Caco-2 (cell line): ENCODE measurements at regions of chr6 and their contacts with region 1.

Region 1: DNA sequence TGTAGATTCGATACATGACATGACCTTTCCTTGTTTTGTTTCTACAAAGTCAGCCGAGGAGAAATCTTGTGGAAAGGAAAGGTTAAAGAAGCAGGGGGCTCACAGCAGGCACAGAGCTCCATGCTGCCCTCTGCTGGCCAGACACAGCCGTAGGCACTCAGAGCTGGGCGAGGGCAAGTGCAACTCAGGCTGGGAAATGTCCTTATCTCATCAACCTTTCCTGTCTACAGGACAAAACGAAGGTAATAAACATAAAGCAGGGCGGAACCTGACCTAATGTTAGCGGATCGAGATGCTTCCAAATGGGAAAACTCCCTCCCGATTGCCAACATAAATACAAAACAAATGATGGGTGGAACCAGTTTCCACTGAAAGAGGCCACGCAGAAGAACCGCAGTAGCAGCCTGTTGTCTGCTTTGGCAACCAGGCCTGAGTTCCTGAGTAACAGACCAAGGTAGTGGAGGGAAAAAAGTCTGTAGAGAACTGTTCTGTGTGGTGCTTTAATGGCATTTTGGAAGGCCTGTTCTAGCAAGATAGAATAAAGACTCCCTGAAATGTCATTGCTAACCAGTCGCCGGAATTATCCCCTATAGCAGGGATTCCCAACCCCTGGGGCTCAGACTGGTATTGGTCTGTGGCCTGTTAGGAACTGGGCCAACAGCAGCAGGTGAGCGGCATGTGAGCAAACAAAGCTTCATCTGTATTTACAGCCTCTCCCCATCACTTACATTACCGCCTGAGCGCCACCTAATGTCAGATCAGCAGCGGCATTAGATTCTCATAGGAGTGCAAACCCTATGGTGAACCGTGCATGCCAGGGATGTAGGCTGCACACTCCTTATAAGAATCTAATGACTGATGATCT is 85.2 kb downstream of the MBOAT1 start:
- DNase-seq: peak; percentile 66 to 76
- H3K4me3 ChIP-seq: no peak overlapping the region
- H3K4me3 Mint-ChIP-seq: no peak overlapping the region
- H3K27ac Mint-ChIP-seq: no peak overlapping the region
- H3K4me1 ChIP-seq: peaks cover 7% of the 10 kb centered on the region; the same call in 1 of the 2 replicates
- H3K4me1 Mint-ChIP-seq: no peaks in the 10 kb centered on the region
- H3K27me3 ChIP-seq: no peaks in the 10 kb centered on the region
- H3K27me3 Mint-ChIP-seq: no peaks in the 10 kb centered on the region
- CTCF ChIP-seq: peak; percentile 86 to 94

Region 2: GRCh38 chr6:20092071-20092566 is 34.9 kb before region 1 on chr6:
- CTCF ChIA-PET with region 1: interaction called, 18 read pairs
- POLR2A ChIA-PET with region 1: no interaction called
- intact Hi-C with region 1: loop called (anchors 1 kb)
- DNase-seq: peak in 1 of 2 experiments; percentile 40
- H3K4me3 ChIP-seq: no peak overlapping the region
- H3K4me3 Mint-ChIP-seq: no peak overlapping the region
- H3K27ac Mint-ChIP-seq: no peak overlapping the region
- H3K4me1 ChIP-seq: no peaks in the 10 kb centered on the region
- H3K4me1 Mint-ChIP-seq: no peaks in the 10 kb centered on the region
- H3K27me3 ChIP-seq: no peaks in the 10 kb centered on the region
- H3K27me3 Mint-ChIP-seq: peaks cover 6% of the 10 kb centered on the region
- CTCF ChIP-seq: peak; percentile 51 to 58

Region 3: DNA sequence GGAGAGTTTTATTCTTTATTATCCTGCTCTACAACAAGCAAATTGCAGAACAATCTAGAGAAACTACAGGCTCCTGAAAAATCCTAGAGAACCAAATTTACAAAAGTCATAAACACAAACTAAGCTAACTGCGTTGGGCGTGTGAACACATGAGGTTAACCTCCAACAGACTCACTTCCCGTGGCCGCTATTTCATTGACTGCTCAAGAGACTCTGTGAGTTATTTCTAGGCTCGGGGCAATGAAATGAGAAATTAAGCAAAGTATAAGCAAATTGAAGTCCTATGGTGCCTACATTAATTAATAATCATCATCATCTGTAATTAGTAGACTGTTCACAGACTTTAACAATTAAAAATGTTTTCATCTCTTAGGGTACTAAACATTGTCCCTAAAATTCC is 14.8 kb before region 1 on chr6:
- CTCF ChIA-PET with region 1: interaction called, 9 read pairs
- POLR2A ChIA-PET with region 1: no interaction called
- intact Hi-C with region 1: loop called (anchors 1 kb)
- DNase-seq: no peak
- H3K4me3 ChIP-seq: no peak overlapping the region
- H3K4me3 Mint-ChIP-seq: no peak overlapping the region
- H3K27ac Mint-ChIP-seq: no peak overlapping the region
- H3K4me1 ChIP-seq: peaks cover 4% of the 10 kb centered on the region
- H3K4me1 Mint-ChIP-seq: peaks cover 7% of the 10 kb centered on the region
- H3K27me3 ChIP-seq: no peaks in the 10 kb centered on the region
- H3K27me3 Mint-ChIP-seq: no peaks in the 10 kb centered on the region
- CTCF ChIP-seq: no peak

Region 4: GRCh38 chr6:20154753-20155152 is 27.7 kb after region 1 on chr6:
- CTCF ChIA-PET with region 1: interaction called, 6 read pairs
- POLR2A ChIA-PET with region 1: no interaction called
- intact Hi-C with region 1: loop called (anchors 1 kb)
- DNase-seq: no peak
- H3K4me3 ChIP-seq: no peak overlapping the region
- H3K4me3 Mint-ChIP-seq: no peak overlapping the region
- H3K27ac Mint-ChIP-seq: no peak overlapping the region
- H3K4me1 ChIP-seq: peaks cover 6% of the 10 kb centered on the region; the same call in 1 of the 2 replicates
- H3K4me1 Mint-ChIP-seq: no peaks in the 10 kb centered on the region
- H3K27me3 ChIP-seq: no peaks in the 10 kb centered on the region
- H3K27me3 Mint-ChIP-seq: no peaks in the 10 kb centered on the region
- CTCF ChIP-seq: no peak